MCF 10A (cell line): ENCODE measurements at regions of chr12 and their contacts with region 1.

Region 1: GRCh38 chr12:76586764-76587395 is 27.3 kb upstream of the OSBPL8 start:
- DNase-seq: peak; percentile 61
- H3K4me3 Mint-ChIP-seq: no peak overlapping the region
- H3K27ac Mint-ChIP-seq: peak overlapping the region; percentile 79
- H3K4me1 Mint-ChIP-seq: peaks cover 35% of the 10 kb centered on the region
- H3K27me3 Mint-ChIP-seq: no peaks in the 10 kb centered on the region
- CTCF ChIP-seq: peak; percentile 65

Region 2: DNA sequence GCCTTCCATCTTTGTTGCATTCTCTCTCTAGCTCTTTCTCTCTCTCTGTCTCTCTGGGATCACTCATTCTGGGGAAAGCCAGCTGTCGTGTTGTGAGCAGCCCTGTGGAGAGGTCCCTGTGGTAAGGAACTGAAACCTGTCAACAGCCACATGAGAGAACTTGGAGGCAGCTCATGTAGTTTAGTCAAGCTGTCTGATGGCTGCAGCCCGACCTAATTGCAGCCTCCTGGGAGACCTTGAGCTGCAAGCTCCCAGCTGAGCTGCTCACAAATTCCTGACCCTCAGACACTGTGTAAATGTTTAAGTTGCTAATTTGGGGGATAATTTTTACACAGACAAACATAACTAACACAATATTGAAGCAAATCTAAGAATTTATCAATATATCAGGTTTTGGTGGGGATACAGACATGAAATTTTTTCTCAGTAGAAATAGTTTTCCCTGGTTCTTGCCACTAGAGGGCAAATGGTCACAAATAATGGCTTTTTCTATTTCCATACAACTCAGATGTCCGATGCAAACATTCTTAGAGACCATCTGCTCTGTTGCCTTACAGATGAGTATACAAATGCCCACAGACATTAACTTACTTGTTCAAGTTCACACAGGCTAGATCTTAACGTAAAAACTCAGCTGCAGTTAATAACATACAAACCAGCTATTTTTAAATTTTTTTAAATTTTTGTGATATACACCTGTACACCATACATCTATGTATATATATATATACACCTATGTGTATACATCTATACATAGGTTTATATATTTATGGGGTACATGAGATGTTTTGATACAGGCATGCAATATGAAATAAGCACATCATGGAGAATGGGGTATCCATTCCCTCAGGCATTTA is 1060.0 kb before region 1 on chr12:
- CTCF ChIA-PET with region 1: interaction called, 12 read pairs
- POLR2A ChIA-PET with region 1: interaction called, 3 read pairs
- intact Hi-C with region 1: loop called (anchors 1 kb)
- DNase-seq: peak; percentile 59
- H3K4me3 Mint-ChIP-seq: no peak overlapping the region
- H3K27ac Mint-ChIP-seq: no peak overlapping the region
- H3K4me1 Mint-ChIP-seq: no peaks in the 10 kb centered on the region
- H3K27me3 Mint-ChIP-seq: no peaks in the 10 kb centered on the region
- CTCF ChIP-seq: peak; percentile 55

Region 3: GRCh38 chr12:76455582-76456345 is 131.1 kb before region 1 on chr12:
- CTCF ChIA-PET with region 1: interaction called, 60 read pairs
- POLR2A ChIA-PET with region 1: interaction called, 19 read pairs
- intact Hi-C with region 1: loop called (anchors 2 kb)
- DNase-seq: peak; percentile 87
- H3K4me3 Mint-ChIP-seq: no peak overlapping the region
- H3K27ac Mint-ChIP-seq: peak overlapping the region; percentile 84
- H3K4me1 Mint-ChIP-seq: peaks cover 21% of the 10 kb centered on the region
- H3K27me3 Mint-ChIP-seq: no peaks in the 10 kb centered on the region
- CTCF ChIP-seq: peak; percentile 49

Region 4: GRCh38 chr12:76470028-76470939 is 116.6 kb before region 1 on chr12:
- CTCF ChIA-PET with region 1: interaction called, 23 read pairs
- POLR2A ChIA-PET with region 1: interaction called, 3 read pairs
- intact Hi-C with region 1: no loop called
- DNase-seq: peak; percentile 78
- H3K4me3 Mint-ChIP-seq: no peak overlapping the region
- H3K27ac Mint-ChIP-seq: no peak overlapping the region
- H3K4me1 Mint-ChIP-seq: peaks cover 11% of the 10 kb centered on the region
- H3K27me3 Mint-ChIP-seq: no peaks in the 10 kb centered on the region
- CTCF ChIP-seq: no peak

Region 5: DNA sequence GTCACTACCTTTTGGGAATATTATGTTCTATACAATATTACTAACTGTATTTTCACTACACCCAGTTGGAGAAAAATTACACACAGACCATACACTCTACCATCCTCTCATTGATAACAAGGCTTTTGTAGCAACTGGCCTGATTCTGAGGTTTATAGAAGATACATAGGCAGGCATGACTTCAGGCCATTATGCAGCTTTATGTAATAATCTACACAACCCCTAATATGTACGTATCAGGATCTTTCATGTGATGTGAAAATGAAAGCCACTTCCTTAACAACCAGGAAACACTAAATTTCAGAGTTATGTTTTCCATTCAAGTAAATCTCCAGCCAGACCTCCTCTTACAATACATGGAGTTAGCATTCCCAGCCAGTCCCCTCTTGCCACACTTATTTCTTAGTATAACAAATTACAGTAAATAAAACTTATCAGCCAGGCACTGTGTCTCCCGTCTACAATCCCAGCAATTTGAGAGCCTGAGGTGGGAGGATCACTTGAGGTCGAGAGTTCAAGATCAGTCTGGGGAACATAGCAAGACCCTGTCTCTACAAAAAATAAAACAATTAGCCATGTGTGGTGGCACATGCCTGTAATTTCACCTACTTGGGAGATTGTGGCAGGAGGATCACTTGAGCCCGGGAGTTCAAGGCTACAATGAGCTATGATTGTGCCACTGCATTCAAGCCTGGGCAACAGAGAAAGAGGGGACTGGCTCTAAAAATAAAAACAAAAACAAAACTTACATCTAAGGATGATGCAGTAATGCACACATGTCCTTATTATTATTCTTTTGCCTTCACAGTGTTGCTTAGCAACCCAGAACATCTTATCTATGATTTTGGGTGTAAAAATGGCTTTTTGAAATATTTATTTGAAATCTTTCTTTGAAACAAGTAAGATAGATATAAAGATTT is 16.9 kb before region 1 on chr12:
- CTCF ChIA-PET with region 1: interaction called, 12 read pairs
- POLR2A ChIA-PET with region 1: interaction called, 3 read pairs
- intact Hi-C with region 1: no loop called
- DNase-seq: no peak
- H3K4me3 Mint-ChIP-seq: no peak overlapping the region
- H3K27ac Mint-ChIP-seq: no peak overlapping the region
- H3K4me1 Mint-ChIP-seq: no peaks in the 10 kb centered on the region
- H3K27me3 Mint-ChIP-seq: no peaks in the 10 kb centered on the region
- CTCF ChIP-seq: no peak

Region 6: DNA sequence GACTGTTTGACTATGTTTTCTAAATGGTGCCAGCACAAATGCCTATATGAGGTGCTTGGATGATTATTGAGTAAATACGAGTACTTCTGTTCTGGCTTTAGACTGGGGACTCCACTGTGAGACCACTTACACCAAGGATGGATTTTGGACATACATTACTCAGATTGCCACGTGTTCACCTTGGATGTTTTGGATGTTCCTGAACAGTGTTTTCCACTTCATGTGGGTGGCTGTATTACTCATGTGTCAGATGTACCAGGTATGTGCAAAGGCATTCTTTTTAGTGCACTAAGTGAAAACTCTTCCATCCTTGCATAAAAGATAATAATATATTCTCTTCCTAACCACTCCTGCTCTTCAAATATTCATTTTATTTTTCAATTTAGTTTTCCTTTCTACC is 261.3 kb after region 1 on chr12:
- CTCF ChIA-PET with region 1: no interaction called
- POLR2A ChIA-PET with region 1: no interaction called
- intact Hi-C with region 1: no loop called
- DNase-seq: no peak
- H3K4me3 Mint-ChIP-seq: no peak overlapping the region
- H3K27ac Mint-ChIP-seq: no peak overlapping the region
- H3K4me1 Mint-ChIP-seq: no peaks in the 10 kb centered on the region
- H3K27me3 Mint-ChIP-seq: no peaks in the 10 kb centered on the region
- CTCF ChIP-seq: no peak

Region 7: DNA sequence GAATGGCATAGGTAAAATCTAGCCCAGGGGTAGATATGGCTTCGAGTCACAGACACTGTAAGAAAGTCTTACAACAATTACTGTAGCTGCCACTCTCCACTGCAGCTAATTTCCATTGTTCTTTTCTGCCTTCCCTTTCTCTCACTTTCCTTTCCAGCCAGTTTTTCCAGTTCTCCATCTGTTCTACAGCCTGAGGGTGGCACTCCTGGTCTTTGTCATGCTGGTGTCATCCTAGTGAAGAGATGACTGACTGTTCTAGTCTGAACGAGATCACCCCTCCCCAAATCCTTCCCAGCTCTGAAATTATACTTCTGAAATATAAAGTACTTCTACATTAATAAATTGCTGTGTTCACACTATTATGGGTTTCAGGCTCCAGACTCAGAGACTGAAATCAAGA is 366.1 kb after region 1 on chr12:
- CTCF ChIA-PET with region 1: no interaction called
- POLR2A ChIA-PET with region 1: no interaction called
- intact Hi-C with region 1: no loop called
- DNase-seq: peak; percentile 30
- H3K4me3 Mint-ChIP-seq: no peak overlapping the region
- H3K27ac Mint-ChIP-seq: no peak overlapping the region
- H3K4me1 Mint-ChIP-seq: no peaks in the 10 kb centered on the region
- H3K27me3 Mint-ChIP-seq: no peaks in the 10 kb centered on the region
- CTCF ChIP-seq: peak; percentile 16